Posterior vena cava (tissue), 2 donors: ENCODE measurements at regions of chr3 and their contacts with region 1.

Region 1: DNA sequence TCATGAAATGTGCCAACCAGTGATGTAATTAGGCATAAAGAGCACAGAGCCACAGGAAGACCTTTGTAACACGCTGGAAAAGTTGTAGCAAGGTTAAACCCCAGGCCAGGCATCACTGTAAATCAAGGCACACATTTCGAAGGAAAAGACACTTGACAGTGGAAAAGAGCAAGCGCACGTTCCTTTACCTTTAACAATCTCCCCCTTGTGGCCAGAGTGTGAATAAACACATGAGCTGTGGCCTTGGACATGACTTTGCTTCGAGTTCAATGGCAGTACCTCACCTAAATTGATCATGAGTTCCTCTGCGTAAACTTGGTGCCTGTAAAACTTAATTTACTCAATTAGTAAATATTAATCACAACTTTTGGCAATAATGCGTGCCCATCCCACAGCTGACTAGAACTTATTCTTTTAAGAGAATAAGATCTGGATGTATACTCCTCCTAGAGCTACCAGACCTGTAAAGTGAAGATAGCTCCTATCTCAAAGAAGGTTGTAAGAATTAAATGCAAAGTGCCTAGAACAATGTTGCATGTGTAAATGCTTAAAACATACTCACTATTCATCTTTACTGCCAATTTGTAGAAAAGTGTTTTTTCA is 757.0 kb upstream of the NECTIN3 start:
- DNase-seq: no peak

Region 2: DNA sequence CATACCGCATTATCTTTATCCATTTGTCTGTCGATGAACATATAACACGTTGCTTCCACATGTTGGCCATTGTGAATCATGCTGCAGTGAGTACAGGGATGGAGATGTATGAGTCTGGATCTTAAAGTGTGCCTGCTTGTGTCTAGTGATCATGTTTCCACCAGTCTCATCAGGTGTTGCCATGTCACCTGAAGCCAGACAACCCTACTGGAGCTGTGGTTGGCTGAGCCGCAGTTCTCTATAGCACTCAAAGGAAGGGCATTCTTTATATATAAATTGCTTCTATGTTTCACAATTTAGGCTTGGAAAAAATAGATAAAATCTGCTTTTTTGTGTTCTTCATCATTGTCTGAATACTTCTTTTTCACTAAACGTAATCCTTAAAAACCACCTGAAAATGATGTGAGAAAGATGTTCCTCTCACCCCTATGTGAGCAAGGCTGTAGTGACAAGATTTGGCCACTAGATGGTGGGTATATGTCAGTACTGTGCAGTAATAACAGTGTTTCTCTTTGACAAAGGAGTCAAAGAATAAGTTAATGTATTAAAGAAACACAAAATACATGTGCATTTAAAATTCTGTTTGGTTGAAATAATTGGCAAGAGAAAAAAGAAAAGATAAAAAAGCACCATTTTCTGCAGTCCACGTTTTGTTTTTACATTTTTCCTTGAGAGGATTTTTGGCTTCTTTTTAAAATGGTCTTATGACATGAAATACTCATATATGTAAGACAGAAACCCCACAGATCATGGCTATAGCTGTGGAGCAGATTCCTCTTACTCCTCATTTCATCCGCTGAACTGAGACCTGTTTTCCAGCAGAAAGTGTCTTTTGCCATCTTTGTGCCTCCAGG is 582.8 kb before region 1 on chr3:
- intact Hi-C with region 1: loop called in 1 of 2 experiments (anchors 10 kb)
- DNase-seq: no peak

Region 3: GRCh38 chr3:110031975-110032374 is 282.6 kb before region 1 on chr3:
- intact Hi-C with region 1: loop called in 1 of 2 experiments (anchors 5 kb)
- DNase-seq: no peak

Region 4: DNA sequence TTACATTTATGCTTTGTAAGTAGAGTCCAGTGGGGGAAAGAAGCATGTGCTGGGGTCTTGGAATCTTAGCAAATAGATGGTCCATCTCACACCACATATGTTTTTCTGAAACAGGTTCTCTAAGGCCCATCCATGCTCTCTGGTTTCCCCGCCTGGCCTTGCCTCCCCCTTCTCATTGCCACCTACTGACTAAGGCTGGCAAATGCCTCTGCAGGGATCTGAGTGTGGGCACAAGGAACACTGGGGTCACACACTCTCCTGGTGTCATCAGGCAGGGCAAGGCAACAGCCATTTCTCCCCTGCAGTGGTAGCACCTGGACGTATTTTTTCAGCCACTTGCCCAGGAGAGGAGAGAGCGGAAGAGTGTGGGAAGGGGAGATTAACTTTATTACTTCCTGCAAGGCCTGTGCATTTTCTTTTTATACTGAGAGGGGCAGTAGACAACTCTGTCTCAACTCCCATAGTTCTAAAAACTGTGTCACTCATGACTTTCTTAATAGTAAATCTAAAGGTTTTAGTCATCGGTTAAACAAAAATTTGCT is 47.2 kb before region 1 on chr3:
- intact Hi-C with region 1: no loop called
- DNase-seq: no peak

Region 5: DNA sequence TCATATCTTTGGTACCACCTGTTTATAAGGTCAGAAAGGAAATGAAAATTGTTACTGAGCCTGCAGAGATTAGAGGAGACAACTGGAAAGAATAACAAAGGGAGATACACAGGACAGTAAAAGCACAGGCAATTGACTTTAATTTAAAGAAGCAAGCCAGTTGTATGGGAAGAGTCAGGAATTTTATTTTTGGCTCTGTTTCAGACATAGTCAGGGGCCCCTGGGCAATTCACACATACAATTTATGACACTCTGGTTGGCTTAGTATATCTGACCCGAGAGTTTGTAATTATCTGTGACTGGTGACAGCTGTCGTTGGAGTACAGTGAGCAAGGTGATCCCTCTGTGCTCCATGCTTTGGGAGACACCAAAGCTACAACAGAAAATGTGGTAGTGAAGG is 165.1 kb after region 1 on chr3:
- intact Hi-C with region 1: loop called in 1 of 2 experiments (anchors 10 kb)
- DNase-seq: no peak